Ascending aorta (tissue), 2 donors: ENCODE measurements at regions of chr15 and their contacts with region 1.

Region 1: GRCh38 chr15:85794603-85795336 is at the start of gene KLHL25:
- DNase-seq: peak; percentile 82 to 97
- H3K4me3 ChIP-seq: peak within 1 kb of the TSS; percentile 75 to 77
- H3K27ac ChIP-seq: peak within 1 kb of the TSS; percentile 90 to 91
- H3K4me1 ChIP-seq: peaks cover 0 to 11% of the 10 kb centered on the region in 2 donors
- H3K27me3 ChIP-seq: no peaks in the 10 kb centered on the region
- CTCF ChIP-seq: no peak
- total RNA-seq, gene KLHL25: 12.6 TPM

Region 2: DNA sequence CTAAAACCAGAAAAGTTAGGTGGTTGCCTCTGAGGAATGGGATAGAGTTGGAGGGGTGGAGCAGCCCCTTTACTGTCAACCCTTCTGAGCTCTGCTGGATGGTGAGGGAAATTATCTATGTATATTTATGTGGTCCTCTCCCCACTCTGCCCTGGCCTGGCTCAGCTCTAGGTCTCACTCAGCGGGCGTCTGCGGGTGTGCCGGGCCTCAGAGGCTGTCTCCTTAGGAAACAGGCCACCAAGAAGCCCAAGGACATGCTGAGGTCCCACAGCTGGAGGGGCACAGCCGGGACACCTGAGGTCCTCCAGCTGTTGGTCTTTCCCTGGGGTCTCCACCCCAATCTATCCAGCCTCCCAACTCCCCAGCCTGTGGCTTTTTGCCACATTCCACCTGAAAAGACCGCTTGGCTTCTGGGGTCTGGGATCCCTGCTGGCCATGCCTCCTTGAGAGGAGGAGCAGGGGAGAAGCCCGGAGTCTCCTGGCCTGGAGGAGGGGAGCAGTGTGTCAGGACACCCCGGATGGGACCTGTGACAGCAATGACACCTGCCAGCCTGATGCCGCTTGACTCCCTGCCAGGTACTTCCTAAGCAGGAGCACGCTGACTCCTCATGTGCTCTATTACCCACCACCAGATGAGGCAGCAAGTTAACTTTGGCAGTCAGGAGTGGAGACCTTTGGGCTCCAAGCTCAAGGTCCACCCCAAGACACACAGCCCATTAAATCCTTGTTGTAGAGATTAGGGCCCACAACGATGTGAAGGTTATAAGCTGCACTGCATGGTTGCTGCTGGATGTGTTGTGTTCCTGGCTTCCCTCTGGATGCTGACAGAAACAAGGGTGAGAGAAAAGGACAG is 910.6 kb before region 1 on chr15 and contains the start of gene SLC28A1:
- intact Hi-C with region 1: no loop called
- DNase-seq: no peak
- H3K4me3 ChIP-seq: no peak within 1 kb of the TSS
- H3K27ac ChIP-seq: peak within 1 kb of the TSS; percentile 74 to 92
- H3K4me1 ChIP-seq: peaks cover 3 to 16% of the 10 kb centered on the region in 2 donors
- H3K27me3 ChIP-seq: no peaks in the 10 kb centered on the region
- CTCF ChIP-seq: no peak
- total RNA-seq, gene SLC28A1: not detected

Region 3: DNA sequence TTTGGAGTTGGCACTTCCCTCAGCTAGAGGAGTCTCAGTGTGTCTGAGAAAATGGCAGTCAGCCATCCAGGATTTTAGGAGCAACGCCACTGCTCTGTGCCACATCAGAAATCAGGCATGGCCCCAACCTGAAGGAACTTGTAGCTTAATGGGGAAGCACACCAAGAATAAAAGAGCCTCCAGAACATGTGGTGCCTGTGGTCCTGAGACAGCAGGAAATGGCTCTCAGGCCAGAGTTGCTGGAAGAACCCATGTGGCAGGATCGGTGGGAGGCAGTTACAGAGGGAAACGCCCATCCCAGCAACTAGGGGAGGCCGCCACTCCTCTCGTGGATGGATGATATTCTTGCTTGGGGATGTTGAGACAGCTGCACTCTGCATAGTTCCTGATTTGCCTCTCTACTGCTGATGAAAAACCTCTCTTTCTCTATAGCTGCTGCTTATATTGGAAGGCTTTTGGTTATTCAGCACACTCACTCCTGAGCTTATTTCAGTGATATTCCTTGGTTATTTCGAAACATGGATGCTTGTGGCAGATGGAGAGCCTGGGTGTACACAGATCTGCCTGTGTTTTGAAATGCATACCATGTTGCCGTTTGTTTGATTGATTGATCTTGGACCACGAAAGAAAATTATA is 52.5 kb before region 1 on chr15:
- intact Hi-C with region 1: no loop called
- DNase-seq: no peak
- H3K4me3 ChIP-seq: no peak overlapping the region
- H3K27ac ChIP-seq: peak overlapping the region; percentile 32 to 63
- H3K4me1 ChIP-seq: peaks cover 8 to 11% of the 10 kb centered on the region in 2 donors
- H3K27me3 ChIP-seq: no peaks in the 10 kb centered on the region
- CTCF ChIP-seq: no peak

Region 4: DNA sequence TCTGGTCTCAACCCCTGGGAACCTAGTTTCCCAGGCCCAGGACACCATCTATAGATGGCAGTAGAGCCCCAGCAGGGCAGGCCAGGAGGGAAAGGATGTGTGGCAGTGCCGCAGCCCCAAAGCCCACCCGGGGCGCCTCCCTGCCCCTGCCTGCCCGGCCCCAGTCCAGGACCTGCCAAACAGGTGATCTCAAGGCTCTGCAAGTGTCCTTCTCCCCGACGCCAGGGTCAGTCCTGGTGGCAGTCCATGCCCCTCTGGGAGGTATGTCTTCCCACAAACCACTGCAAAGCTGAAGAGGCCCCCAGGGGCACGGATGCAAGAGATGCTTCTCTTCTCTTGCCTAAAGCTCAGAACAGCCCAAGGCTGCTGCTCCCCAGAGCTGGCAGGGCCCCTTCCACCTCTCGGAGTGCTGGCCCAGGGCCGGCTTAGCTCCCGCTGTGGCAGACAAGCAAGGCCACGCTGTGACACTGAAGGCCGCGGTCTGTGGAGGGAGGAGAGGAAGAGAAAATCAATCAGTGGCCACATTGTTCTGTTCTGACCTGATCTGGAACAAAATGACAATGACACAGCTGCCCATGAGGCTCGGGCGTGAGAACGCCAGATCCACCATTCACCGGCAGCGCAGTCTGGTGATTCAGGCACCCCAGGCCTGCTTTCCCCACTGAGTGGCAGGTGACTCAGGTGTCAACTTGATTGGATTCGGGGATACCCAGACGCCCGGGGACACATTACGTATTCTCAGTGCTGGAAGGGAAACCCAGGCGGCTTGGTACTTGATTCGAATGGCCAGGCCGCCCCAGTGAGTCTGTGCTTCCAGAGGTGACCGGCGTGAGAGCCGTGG is 34.0 kb before region 1 on chr15:
- intact Hi-C with region 1: loop called (anchors 5 kb)
- DNase-seq: no peak
- H3K4me3 ChIP-seq: no peak overlapping the region
- H3K27ac ChIP-seq: no peak overlapping the region
- H3K4me1 ChIP-seq: peaks cover 17 to 23% of the 10 kb centered on the region in 2 donors
- H3K27me3 ChIP-seq: no peaks in the 10 kb centered on the region
- CTCF ChIP-seq: no peak

Region 5: GRCh38 chr15:85910834-85911233 is 116.1 kb after region 1 on chr15:
- intact Hi-C with region 1: no loop called
- DNase-seq: no peak
- H3K4me3 ChIP-seq: no peak overlapping the region
- H3K27ac ChIP-seq: no peak overlapping the region
- H3K4me1 ChIP-seq: no peaks in the 10 kb centered on the region
- H3K27me3 ChIP-seq: no peaks in the 10 kb centered on the region
- CTCF ChIP-seq: no peak

Region 6: GRCh38 chr15:86300390-86301125 is 505.8 kb after region 1 on chr15:
- intact Hi-C with region 1: no loop called
- DNase-seq: no peak
- H3K4me3 ChIP-seq: no peak overlapping the region
- H3K27ac ChIP-seq: no peak overlapping the region
- H3K4me1 ChIP-seq: no peaks in the 10 kb centered on the region
- H3K27me3 ChIP-seq: no peaks in the 10 kb centered on the region
- CTCF ChIP-seq: no peak